ENCODE measurements at regions of chr10 and their contacts with region 1.

Region 1: GRCh38 chr10:128297709-128298378 is 171.6 kb upstream of the MKI67 start:
- DNase-seq: no peak
- H3K4me3 ChIP-seq: no peak overlapping the region
- H3K27ac ChIP-seq: no peak overlapping the region
- H3K4me1 ChIP-seq: no peaks in the 10 kb centered on the region
- H3K27me3 ChIP-seq: peaks cover 0 to 5% of the 10 kb centered on the region in 2 donors
- CTCF ChIP-seq: no peak

Region 2: DNA sequence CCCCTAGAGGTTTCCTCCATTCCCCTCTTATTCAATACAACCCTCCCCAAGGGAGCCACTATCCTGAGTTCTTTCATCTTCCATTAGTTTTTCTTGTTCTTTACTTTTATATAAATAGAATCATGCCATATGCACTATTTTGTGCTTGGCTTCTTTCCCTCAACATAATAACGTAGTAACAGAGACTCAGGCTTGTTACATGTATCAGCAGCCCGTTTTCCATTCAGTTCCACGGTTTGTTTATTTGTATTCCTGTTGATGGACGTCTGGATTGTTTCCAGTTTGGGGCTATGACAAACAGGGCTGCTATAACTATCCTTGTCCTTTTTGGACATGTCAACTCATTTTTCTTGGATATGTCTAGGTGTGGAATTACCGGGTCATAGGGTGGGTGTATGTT is 92.8 kb after region 1 on chr10:
- intact Hi-C with region 1: no loop called
- DNase-seq: no peak
- H3K4me3 ChIP-seq: no peak overlapping the region
- H3K27ac ChIP-seq: no peak overlapping the region
- H3K4me1 ChIP-seq: no peaks in the 10 kb centered on the region
- H3K27me3 ChIP-seq: no peaks in the 10 kb centered on the region
- CTCF ChIP-seq: no peak

Region 3: GRCh38 chr10:128780156-128780761 is 482.4 kb after region 1 on chr10:
- intact Hi-C with region 1: loop called (anchors 10 kb)
- DNase-seq: no peak
- H3K4me3 ChIP-seq: no peak overlapping the region
- H3K27ac ChIP-seq: no peak overlapping the region
- H3K4me1 ChIP-seq: no peaks in the 10 kb centered on the region
- H3K27me3 ChIP-seq: no peaks in the 10 kb centered on the region
- CTCF ChIP-seq: no peak

Measured in tibial artery (tissue), 4 donors.